ENCODE measurements at regions of chr5 and their contacts with region 1.

Region 1: DNA sequence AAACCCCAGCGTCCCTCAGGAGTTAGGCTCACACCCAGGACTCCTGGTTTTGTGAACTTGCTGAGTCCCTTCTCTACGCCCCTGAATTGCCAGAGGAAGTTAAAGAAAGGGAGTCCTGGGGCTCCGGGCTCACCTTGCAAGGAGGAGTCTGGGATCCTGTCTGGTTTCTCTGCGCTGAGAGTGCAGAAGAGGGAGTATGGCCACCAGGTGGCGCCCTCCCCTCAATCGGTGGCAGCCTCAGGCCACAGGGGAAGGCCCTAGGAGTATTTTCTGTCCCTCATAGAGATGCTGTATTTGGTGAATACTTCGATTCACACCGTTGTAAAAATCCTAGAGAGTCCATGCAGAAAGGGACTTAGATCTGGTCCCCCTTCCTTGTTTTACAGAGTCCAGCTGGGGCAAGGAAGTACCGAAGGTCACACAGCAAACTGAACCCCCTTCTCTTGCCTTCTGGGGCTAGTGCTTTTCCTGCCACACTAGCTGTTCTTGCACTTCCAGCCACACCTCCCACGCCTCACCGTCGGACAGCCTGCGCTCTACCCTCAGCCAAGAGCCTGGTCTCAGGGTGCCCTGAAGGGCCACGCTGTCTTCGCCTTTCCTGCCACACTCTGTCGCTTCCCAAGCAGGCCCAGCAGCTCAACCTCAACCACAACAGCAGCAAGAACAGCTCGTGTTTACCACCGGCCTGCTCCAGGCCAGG is 10.2 kb downstream of the HAND1 start:
- DNase-seq: peak; percentile 65 to 94
- ATAC-seq: peak; percentile 94 to 98
- H3K4me3 ChIP-seq: no peak overlapping the region
- H3K27ac ChIP-seq: no peak overlapping the region
- H3K4me1 ChIP-seq: peaks cover 29% of the 10 kb centered on the region
- CTCF ChIP-seq: peak; percentile 93
- EP300 ChIP-seq: no peak
- POLR2A ChIP-seq: no peak
- RAD21 ChIP-seq: peak; percentile 87 to 93

Region 2: GRCh38 chr5:154446183-154447088 is 21.4 kb before region 1 on chr5:
- CTCF ChIA-PET with region 1: interaction called, 24 read pairs
- POLR2A ChIA-PET with region 1: no interaction called
- DNase-seq: peak; percentile 39 to 46
- ATAC-seq: peak; percentile 55 to 57
- H3K4me3 ChIP-seq: peak overlapping the region; percentile 95
- H3K27ac ChIP-seq: peak overlapping the region; percentile 70 to 96
- H3K4me1 ChIP-seq: peaks cover 29% of the 10 kb centered on the region
- CTCF ChIP-seq: no peak
- EP300 ChIP-seq: no peak
- POLR2A ChIP-seq: no peak
- RAD21 ChIP-seq: no peak

Region 3: GRCh38 chr5:154486427-154486866 is 18.6 kb after region 1 on chr5:
- CTCF ChIA-PET with region 1: interaction called, 12 read pairs
- POLR2A ChIA-PET with region 1: no interaction called
- DNase-seq: no peak
- ATAC-seq: no peak
- H3K4me3 ChIP-seq: no peak overlapping the region
- H3K27ac ChIP-seq: no peak overlapping the region
- H3K4me1 ChIP-seq: no peaks in the 10 kb centered on the region
- CTCF ChIP-seq: no peak
- EP300 ChIP-seq: no peak
- POLR2A ChIP-seq: no peak
- RAD21 ChIP-seq: no peak

Region 4: DNA sequence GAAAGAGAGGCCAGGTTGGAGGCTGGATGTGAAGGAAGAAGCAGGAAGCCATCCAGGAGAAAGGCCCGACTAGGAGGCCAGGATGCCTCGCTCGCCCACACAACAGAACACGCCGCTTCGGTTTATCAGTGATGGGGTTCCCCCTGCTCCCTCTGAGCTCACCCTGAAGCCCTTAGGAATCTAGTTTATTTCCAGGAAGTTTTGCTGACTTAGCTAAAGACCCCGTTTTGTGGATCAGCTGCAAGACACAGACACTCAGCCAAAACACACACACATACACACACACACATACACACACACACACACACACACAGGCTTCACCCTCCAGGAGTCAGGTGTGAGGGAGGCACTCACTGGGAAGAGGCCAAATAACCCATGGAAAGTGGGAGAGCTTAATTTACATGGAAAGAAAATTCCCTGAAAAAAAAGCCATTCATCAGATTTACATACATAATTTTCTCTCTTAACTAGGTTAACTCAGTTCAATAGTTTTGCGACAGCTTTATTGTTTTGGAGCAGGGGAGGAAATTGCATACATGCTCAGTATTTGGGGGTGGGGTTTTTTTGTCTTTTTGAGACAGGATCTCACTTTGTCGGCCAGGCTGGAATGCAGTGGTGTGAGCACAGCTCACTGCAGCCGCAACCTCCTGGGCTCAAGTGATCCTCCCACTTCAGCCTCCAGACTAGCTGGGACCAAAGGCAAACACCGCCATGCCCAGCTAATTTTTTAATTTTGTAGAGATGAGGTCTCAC is 102.9 kb after region 1 on chr5:
- CTCF ChIA-PET with region 1: interaction called, 13 read pairs
- POLR2A ChIA-PET with region 1: no interaction called
- DNase-seq: no peak
- ATAC-seq: no peak
- H3K4me3 ChIP-seq: no peak overlapping the region
- H3K27ac ChIP-seq: no peak overlapping the region
- H3K4me1 ChIP-seq: no peaks in the 10 kb centered on the region
- CTCF ChIP-seq: no peak
- EP300 ChIP-seq: no peak
- POLR2A ChIP-seq: no peak
- RAD21 ChIP-seq: no peak

Region 5: DNA sequence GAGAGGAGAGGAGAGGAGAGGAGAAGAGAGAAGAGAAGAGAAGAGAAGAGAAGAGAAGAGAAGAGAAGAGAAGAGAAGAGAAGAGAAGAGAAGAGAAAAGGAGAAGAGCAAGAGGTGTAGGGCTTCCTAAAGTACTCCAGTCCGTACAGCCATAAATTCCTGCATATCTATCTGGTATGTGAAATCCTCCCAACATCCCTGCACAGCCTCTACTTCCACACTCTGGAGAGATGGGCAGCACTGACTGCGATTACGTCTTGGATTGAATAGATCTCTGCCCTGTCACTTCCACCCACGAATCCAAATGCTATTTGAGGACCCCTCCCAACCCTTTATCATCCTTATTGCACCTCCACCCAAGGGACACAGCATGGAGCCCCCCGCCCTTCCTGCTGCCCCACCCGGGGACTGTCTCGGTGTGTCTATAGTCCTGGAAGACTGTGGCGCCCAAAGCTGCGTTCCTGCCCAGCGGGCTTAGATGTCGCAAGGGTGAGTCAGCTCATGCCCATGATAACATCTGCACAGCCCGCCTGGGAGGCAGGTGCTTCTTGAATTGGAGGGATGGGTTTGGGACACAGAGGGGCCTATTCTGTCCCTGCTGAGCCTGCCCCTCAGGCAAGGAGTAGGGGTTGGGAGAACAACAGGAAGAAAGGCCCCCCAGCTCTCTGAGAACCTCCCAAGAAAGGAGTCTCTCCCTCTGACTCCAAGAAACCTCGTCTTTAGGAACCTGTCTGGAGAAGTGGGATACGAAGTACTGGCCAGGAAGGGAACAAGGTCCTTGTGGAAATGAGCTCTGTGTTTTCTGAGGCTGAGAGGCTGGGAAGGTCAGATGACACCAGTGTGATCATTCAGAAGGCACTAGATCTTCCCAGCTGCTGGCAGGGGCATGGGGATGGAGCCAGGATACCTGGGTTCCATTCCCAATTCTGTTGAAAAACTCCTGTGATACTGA is 116.0 kb after region 1 on chr5:
- CTCF ChIA-PET with region 1: interaction called, 11 read pairs
- POLR2A ChIA-PET with region 1: no interaction called
- DNase-seq: peak; percentile 53 to 80
- ATAC-seq: peak; percentile 92 to 95
- H3K4me3 ChIP-seq: peak overlapping the region; percentile 13; the same call in 1 of the 3 replicates
- H3K27ac ChIP-seq: peak overlapping the region; percentile 47 to 62
- H3K4me1 ChIP-seq: peaks cover 50% of the 10 kb centered on the region
- CTCF ChIP-seq: no peak
- EP300 ChIP-seq: no peak
- POLR2A ChIP-seq: no peak
- RAD21 ChIP-seq: no peak

Region 6: GRCh38 chr5:154627698-154628678 is 160.2 kb after region 1 on chr5:
- CTCF ChIA-PET with region 1: interaction called, 25 read pairs
- POLR2A ChIA-PET with region 1: no interaction called
- DNase-seq: no peak
- ATAC-seq: no peak
- H3K4me3 ChIP-seq: no peak overlapping the region
- H3K27ac ChIP-seq: no peak overlapping the region
- H3K4me1 ChIP-seq: no peaks in the 10 kb centered on the region
- CTCF ChIP-seq: no peak
- EP300 ChIP-seq: no peak
- POLR2A ChIP-seq: no peak
- RAD21 ChIP-seq: no peak

Measured in A549 (cell line).